Activated CD8-positive, alpha-beta T cell treated with anti-CD3 and anti-CD28 coated beads, Interleukin-2, amount 10 ng/mL, durations not matched to agents 7 days and 5 days (primary cell): ENCODE measurements at regions of chr5 and their contacts with region 1.

Region 1: GRCh38 chr5:65925601-65926275 is 637 bp upstream of the ERBIN start:
- DNase-seq: peak; percentile 75
- ATAC-seq: peak; percentile 73
- H3K4me3 Mint-ChIP-seq: peak overlapping the region; percentile 85
- H3K27ac Mint-ChIP-seq: peak overlapping the region; percentile 94
- H3K4me1 Mint-ChIP-seq: peaks cover 26% of the 10 kb centered on the region
- H3K27me3 Mint-ChIP-seq: peaks cover 16% of the 10 kb centered on the region

Region 2: GRCh38 chr5:65721720-65722574 is 203.8 kb before region 1 on chr5 and contains the starts of genes NLN and SGTB:
- CTCF ChIA-PET with region 1: no interaction called
- POLR2A ChIA-PET with region 1: interaction called, 18 read pairs
- DNase-seq: peak; percentile 83
- ATAC-seq: peak; percentile 96
- H3K4me3 Mint-ChIP-seq: peak within 1 kb of the TSS; percentile 86
- H3K27ac Mint-ChIP-seq: peak within 1 kb of the TSS; percentile 89
- H3K4me1 Mint-ChIP-seq: peaks cover 24% of the 10 kb centered on the region
- H3K27me3 Mint-ChIP-seq: no peaks in the 10 kb centered on the region
- total RNA-seq, gene NLN: 13.9 to 14.3 TPM
- total RNA-seq, gene SGTB: 17.5 to 18.4 TPM

Region 3: GRCh38 chr5:66144074-66144833 is 218.5 kb after region 1 on chr5 and contains the start of gene SREK1:
- CTCF ChIA-PET with region 1: no interaction called
- POLR2A ChIA-PET with region 1: interaction called, 16 read pairs
- DNase-seq: peak; percentile 90
- ATAC-seq: peak; percentile 91
- H3K4me3 Mint-ChIP-seq: peak within 1 kb of the TSS; percentile 97
- H3K27ac Mint-ChIP-seq: peak within 1 kb of the TSS; percentile 99
- H3K4me1 Mint-ChIP-seq: peaks cover 33% of the 10 kb centered on the region
- H3K27me3 Mint-ChIP-seq: no peaks in the 10 kb centered on the region
- total RNA-seq, gene SREK1: 62.3 TPM